Activated CD8-positive, alpha-beta T cell treated with anti-CD3 and anti-CD28 coated beads, Interleukin-2, amount 10 ng/mL, durations not matched to agents 7 days and 5 days (primary cell): ENCODE measurements at regions of chr10 and their contacts with region 1.

Region 1: GRCh38 chr10:104353325-104354048 is at the start of gene CFAP58:
- DNase-seq: peak; percentile 94
- ATAC-seq: peak; percentile 96
- H3K4me3 Mint-ChIP-seq: no peak within 1 kb of the TSS
- H3K27ac Mint-ChIP-seq: peak within 1 kb of the TSS; percentile 40
- H3K4me1 Mint-ChIP-seq: no peaks in the 10 kb centered on the region
- H3K27me3 Mint-ChIP-seq: peaks cover 2% of the 10 kb centered on the region
- total RNA-seq, gene CFAP58: 0.24 to 0.47 TPM

Region 2: GRCh38 chr10:104254493-104255310 is 98.8 kb before region 1 on chr10 and contains the start of gene GSTO1:
- CTCF ChIA-PET with region 1: interaction called, 12 read pairs
- POLR2A ChIA-PET with region 1: no interaction called
- DNase-seq: peak; percentile 62
- ATAC-seq: peak; percentile 81
- H3K4me3 Mint-ChIP-seq: peak within 1 kb of the TSS; percentile 93
- H3K27ac Mint-ChIP-seq: peak within 1 kb of the TSS; percentile 97
- H3K4me1 Mint-ChIP-seq: peaks cover 50% of the 10 kb centered on the region
- H3K27me3 Mint-ChIP-seq: peaks cover 4% of the 10 kb centered on the region
- total RNA-seq, gene GSTO1: 114 to 119 TPM

Region 3: DNA sequence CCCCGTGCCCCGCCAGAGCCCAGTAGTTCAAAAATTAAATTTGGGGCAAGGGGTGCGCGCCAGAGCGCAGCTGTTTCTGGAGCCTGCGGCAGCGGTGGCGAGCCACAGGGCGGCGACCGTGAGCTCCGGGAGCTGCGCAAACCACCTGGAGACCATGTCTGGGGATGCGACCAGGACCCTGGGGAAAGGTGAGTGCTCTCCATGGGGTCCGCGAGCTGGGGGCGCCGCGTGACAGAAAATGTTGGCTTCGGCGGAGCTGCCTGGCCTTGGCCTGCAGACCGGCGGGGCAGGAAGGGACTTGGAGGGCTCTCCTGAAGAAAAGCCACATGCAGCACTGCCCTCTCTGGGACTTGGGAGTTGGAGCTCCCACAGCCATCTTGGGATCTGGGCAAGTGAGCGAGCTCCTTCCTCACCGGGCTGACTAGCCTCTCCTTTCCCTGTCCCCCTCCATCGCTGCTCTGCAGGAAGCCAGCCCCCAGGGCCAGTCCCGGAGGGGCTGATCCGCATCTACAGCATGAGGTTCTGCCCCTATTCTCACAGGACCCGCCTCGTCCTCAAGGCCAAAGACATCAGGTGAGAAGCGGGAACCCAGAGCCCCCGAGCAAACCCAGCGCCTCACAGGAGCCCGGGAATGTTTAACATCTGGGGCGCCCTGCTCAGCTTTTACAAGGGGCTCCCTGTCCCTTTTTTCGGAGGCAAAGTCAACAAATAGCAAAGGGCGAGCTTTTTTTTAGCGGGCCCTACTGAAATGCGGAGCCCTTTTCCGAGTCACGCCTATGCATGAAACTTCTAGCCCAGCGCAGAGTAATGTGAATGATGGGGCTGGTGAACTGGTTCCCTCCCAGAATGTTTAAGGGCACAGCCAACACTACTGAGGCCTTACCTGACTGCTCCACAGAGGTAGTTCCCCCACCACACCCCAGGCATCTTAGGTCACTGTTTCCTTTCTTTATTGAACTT is 78.4 kb before region 1 on chr10:
- CTCF ChIA-PET with region 1: interaction called, 152 read pairs
- POLR2A ChIA-PET with region 1: no interaction called
- DNase-seq: peak; percentile 49
- ATAC-seq: peak; percentile 90
- H3K4me3 Mint-ChIP-seq: peak overlapping the region; percentile 45
- H3K27ac Mint-ChIP-seq: no peak overlapping the region
- H3K4me1 Mint-ChIP-seq: peaks cover 8% of the 10 kb centered on the region
- H3K27me3 Mint-ChIP-seq: peaks cover 20% of the 10 kb centered on the region

Region 4: DNA sequence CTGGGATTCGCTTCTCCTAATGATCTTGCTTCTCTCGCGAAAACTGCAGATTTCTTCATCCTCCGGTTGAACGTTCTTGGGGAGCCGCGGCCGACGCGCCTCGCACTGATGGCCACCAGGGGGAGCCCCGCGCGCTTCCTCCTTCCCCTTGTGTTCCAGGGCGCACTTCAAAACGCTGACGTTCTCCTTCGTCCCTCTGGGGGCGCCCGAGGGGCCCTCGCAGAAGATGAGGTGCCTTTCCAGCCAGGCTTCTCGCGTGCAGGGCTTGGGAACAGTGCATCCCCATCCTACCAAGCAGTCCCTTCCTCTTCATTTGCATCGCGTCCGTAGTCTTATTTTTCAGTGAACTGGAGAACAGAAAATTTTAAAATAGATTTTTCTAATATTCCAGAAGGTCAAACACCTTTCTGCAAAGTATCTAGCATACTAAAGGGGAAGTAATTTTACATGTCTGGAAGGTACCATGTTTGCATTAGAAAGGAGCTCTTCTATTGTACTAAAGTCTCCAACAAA is 62.0 kb before region 1 on chr10:
- CTCF ChIA-PET with region 1: interaction called, 368 read pairs
- POLR2A ChIA-PET with region 1: interaction called, 4 read pairs
- DNase-seq: peak; percentile 93
- ATAC-seq: peak; percentile 98
- H3K4me3 Mint-ChIP-seq: no peak overlapping the region
- H3K27ac Mint-ChIP-seq: no peak overlapping the region
- H3K4me1 Mint-ChIP-seq: peaks cover 13% of the 10 kb centered on the region
- H3K27me3 Mint-ChIP-seq: peaks cover 32% of the 10 kb centered on the region

Region 5: GRCh38 chr10:104308439-104308903 is 45.0 kb before region 1 on chr10:
- CTCF ChIA-PET with region 1: interaction called, 303 read pairs
- POLR2A ChIA-PET with region 1: interaction called, 4 read pairs
- DNase-seq: peak; percentile 59
- ATAC-seq: peak; percentile 78
- H3K4me3 Mint-ChIP-seq: peak overlapping the region; percentile 49
- H3K27ac Mint-ChIP-seq: peak overlapping the region; percentile 87
- H3K4me1 Mint-ChIP-seq: peaks cover 79% of the 10 kb centered on the region
- H3K27me3 Mint-ChIP-seq: peaks cover 4% of the 10 kb centered on the region

Region 6: DNA sequence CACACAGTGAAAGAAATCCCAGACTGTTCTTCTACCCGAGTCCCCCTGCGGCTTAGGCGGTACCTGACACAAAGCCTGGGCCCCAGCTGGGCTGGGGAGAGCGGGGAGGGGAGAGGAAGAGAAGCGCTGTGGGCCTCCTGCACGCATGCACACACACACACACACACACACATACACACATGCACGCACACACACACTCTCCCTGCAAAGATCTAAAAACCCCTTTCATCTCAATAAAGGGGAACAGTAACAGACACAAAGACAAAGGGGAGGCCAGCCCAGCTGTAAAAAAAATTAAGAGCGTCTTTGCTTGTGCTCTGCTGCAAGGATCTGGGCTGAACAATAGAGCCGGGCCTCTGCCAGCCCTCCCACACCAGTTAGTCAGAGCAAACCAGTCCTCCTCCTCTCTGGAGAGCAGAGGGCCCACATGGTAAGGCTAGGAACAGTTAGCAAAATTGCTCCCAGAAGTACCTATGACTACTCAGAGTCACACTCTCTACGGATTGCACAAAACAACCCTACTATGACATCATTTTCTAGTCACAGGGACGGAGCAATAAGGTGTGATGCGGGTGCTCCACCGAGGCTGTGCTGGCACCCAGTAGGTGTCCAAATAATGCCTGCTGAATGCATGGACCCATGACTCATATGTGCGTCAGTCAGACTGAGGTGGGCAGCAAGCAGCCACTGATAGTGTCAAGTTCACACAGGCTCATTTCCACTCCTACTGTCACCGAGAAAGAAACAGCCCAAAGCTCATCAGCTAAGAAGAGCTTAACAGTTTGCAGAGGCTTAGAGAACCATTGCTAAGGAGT is 24.4 kb before region 1 on chr10:
- CTCF ChIA-PET with region 1: interaction called, 53 read pairs
- POLR2A ChIA-PET with region 1: interaction called, 5 read pairs
- DNase-seq: peak; percentile 79
- ATAC-seq: peak; percentile 69
- H3K4me3 Mint-ChIP-seq: peak overlapping the region; percentile 55
- H3K27ac Mint-ChIP-seq: peak overlapping the region; percentile 91
- H3K4me1 Mint-ChIP-seq: peaks cover 98% of the 10 kb centered on the region
- H3K27me3 Mint-ChIP-seq: no peaks in the 10 kb centered on the region

Region 7: GRCh38 chr10:104424719-104425118 is 71.2 kb after region 1 on chr10:
- CTCF ChIA-PET with region 1: no interaction called
- POLR2A ChIA-PET with region 1: no interaction called
- DNase-seq: no peak
- ATAC-seq: no peak
- H3K4me3 Mint-ChIP-seq: no peak overlapping the region
- H3K27ac Mint-ChIP-seq: no peak overlapping the region
- H3K4me1 Mint-ChIP-seq: peaks cover 2% of the 10 kb centered on the region
- H3K27me3 Mint-ChIP-seq: no peaks in the 10 kb centered on the region

Region 8: DNA sequence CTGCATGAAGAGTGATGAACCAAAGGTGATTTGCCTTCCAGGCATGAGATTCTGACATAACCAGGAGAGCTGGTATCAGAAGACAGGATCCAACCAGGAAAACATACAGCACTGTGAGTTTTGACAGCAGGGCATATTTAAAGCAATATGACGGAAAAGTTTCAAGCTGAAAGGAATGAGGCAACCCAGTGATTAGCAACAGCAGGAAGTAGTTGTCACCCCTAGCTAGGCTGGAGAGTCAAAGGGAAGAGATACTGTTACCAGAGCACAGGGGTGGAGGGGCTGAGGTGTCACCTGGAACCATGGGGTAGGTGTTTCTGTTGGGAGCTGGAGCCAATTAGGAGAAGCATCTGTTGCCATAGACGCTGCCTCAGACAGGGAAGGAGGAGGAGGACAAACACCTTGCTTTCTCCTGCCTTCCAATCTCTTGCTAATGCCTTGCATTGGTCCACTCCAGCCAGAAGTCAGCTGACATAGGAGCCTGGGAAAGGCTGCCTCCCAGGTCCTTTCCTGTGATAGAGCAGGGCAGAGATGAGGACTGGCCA is 162.3 kb after region 1 on chr10:
- CTCF ChIA-PET with region 1: no interaction called
- POLR2A ChIA-PET with region 1: no interaction called
- DNase-seq: no peak
- ATAC-seq: no peak
- H3K4me3 Mint-ChIP-seq: no peak overlapping the region
- H3K27ac Mint-ChIP-seq: no peak overlapping the region
- H3K4me1 Mint-ChIP-seq: no peaks in the 10 kb centered on the region
- H3K27me3 Mint-ChIP-seq: peaks cover 5% of the 10 kb centered on the region